ENCODE measurements at regions of chr3 and their contacts with region 1.

Region 1: DNA sequence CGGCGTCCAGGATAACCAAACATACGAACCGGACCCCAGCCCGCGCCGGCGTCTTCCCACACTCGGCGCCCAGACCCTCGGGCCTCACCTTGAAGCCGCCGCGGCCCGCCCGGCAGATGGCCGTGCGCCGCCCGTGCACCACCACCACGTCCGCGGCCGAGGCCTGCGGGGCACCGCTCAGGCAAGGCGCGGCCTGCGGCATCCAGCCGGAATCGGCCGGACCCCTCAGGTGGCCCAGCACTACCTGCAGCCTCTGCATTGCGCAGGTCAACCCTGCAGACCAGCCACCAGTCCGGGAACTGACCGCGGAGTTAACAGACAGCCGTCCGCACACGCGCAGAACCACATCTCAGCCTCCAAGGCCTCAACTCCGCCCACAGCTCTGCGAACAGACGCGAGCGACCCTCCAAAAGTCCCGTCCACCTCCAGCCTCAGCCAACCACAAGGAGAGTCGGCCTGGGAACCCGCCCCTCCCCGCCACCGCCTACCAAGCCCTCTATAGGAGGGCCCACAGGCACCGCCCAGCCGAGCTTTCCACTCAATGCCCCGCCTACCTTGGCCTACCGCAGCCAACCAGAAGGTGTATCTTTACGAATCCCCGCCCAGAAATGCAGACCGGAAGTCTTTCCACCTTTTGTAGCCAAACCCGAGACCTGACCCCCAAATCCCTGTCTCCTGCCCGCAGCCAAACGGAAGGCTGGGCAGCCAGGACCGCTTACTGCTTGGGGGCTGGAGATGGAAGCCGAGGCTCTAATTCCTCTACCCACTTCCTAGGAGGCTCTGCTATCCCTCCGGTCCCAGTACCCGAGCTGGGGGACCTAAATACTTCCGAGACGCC is at the start of gene ACAA1:
- DNase-seq: peak; percentile 100
- H3K4me3 ChIP-seq: peak within 1 kb of the TSS; percentile 94 to 98 (median 94)
- H3K27ac ChIP-seq: peak within 1 kb of the TSS; percentile 92 to 97 (median 94)
- H3K4me1 ChIP-seq: peaks cover 29 to 62% (median 46%) of the 10 kb centered on the region in 4 donors
- H3K27me3 ChIP-seq: no peaks in the 10 kb centered on the region
- CTCF ChIP-seq: no peak
- EP300 ChIP-seq: no peak
- POLR2A ChIP-seq: peak; percentile 79
- total RNA-seq, gene ACAA1: 31.3 to 49.4 (median 39.1) TPM

Region 2: DNA sequence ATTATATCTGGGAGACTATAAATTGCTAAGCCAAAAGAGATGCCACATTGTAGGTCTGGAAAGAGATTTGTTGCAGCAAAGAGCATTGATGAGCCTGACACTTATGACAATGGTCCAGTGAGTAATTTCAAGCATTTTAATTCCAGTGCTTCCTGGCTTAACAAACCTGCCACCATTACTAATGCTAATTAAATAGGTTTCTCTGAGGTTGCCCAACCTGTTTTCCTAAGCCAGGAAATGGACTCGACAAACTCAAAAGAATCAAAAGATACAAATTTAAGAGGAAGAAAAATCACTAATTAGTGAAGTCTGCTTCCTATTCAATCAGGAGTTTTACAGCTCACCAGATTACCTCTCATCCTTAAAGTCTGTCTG is 312.1 kb before region 1 on chr3:
- intact Hi-C with region 1: no loop called
- DNase-seq: no peak
- H3K4me3 ChIP-seq: no peak overlapping the region
- H3K27ac ChIP-seq: no peak overlapping the region
- H3K4me1 ChIP-seq: peaks cover 8 to 30% (median 18%) of the 10 kb centered on the region in 4 donors
- H3K27me3 ChIP-seq: no peaks in the 10 kb centered on the region
- CTCF ChIP-seq: no peak
- EP300 ChIP-seq: no peak
- POLR2A ChIP-seq: no peak

Region 3: DNA sequence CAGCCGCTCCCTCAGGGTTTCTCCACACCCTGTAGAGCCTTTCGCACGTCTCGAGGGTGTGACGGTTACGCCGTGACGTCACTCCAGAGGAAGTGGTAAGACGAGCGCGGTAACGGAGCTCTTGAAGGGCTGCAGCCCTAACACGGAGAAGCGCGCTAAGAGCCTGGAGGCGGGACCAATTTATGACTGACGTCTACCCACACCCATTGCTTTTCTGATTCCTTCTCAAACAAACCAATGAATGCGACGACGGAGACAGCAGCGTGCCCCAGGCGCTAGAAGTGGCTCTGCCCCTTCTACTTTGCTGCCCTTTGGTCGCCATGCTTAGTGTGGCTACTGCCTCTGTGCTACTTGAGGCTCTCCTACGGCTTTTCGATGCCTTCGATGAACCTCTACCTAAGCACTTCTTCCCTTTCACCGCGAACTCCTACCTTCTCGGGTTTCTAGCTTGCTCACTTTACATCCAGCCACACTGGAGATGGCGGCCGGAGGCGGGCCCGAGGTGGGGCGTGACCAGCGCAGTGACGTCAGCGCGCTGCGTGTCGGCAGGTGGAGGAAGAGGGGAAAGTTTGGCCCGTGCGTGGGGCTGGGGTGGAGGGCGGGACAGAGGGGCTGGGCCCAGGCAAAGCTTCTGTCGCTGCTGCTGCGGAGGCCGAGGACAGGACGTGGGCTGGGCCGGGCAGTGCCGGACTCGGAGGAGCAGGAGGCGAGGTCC is 28.1 kb after region 1 on chr3 and contains the start of gene OXSR1:
- intact Hi-C with region 1: loop called (anchors 2 kb)
- DNase-seq: peak; percentile 100
- H3K4me3 ChIP-seq: peak within 1 kb of the TSS; percentile 86 to 99 (median 92)
- H3K27ac ChIP-seq: peak within 1 kb of the TSS; percentile 97 to 98 (median 97)
- H3K4me1 ChIP-seq: peaks cover 14 to 45% (median 43%) of the 10 kb centered on the region in 4 donors
- H3K27me3 ChIP-seq: no peaks in the 10 kb centered on the region
- CTCF ChIP-seq: no peak
- EP300 ChIP-seq: peak; percentile 15
- POLR2A ChIP-seq: peak; percentile 85
- total RNA-seq, gene OXSR1: 27.0 to 46.7 (median 32.9) TPM

Region 4: GRCh38 chr3:38190481-38190881 is 53.5 kb after region 1 on chr3:
- intact Hi-C with region 1: no loop called
- DNase-seq: no peak
- H3K4me3 ChIP-seq: no peak overlapping the region
- H3K27ac ChIP-seq: no peak overlapping the region
- H3K4me1 ChIP-seq: peaks cover 0 to 11% (median 0%) of the 10 kb centered on the region in 4 donors
- H3K27me3 ChIP-seq: no peaks in the 10 kb centered on the region
- CTCF ChIP-seq: no peak
- EP300 ChIP-seq: no peak
- POLR2A ChIP-seq: no peak

Region 5: DNA sequence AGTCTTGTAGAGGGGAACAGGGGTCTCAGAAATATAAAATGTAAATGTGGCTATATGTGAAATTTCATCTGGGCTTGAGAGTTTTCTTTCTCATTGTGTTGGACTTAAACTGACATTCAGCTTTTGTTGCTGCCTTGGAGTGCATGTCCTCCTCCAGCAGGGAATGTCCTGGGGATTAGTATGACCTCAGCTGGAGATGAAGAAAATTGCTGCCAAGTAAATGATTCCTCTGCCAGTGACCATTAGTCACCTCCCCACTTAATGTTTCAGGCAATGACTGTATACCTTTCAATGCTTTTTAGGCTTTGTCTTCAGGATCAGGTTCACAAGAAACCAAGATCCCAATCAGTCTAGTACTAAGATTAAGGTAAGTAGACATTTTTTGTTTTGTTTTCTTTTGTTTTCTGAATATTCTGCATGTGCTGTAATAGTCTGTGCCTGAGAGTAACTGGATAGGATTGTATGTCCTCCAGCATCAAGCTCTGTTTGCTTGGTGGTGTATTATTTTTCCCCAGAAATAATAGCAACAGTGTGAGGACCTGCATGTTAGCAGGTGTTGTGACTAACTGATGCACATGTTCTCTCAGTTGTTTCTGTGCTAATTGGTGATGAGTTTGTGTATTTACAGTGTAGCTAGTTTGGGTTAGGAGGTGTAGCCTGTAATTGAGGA is 110.5 kb after region 1 on chr3:
- intact Hi-C with region 1: loop called (anchors 5 kb)
- DNase-seq: no peak
- H3K4me3 ChIP-seq: no peak overlapping the region
- H3K27ac ChIP-seq: no peak overlapping the region
- H3K4me1 ChIP-seq: peaks cover 0 to 10% (median 8%) of the 10 kb centered on the region in 4 donors
- H3K27me3 ChIP-seq: no peaks in the 10 kb centered on the region
- CTCF ChIP-seq: peak in 2 of 3 experiments; percentile 25 to 36
- EP300 ChIP-seq: no peak
- POLR2A ChIP-seq: no peak

Region 6: GRCh38 chr3:38453075-38453912 is 316.3 kb after region 1 on chr3 and contains the start of gene ACVR2B:
- intact Hi-C with region 1: loop called (anchors 5 kb)
- DNase-seq: no peak
- H3K4me3 ChIP-seq: peak within 1 kb of the TSS; percentile 78 to 94 (median 90)
- H3K27ac ChIP-seq: peak within 1 kb of the TSS; percentile 84 to 92 (median 90)
- H3K4me1 ChIP-seq: peaks cover 11 to 40% (median 36%) of the 10 kb centered on the region in 4 donors
- H3K27me3 ChIP-seq: no peaks in the 10 kb centered on the region
- CTCF ChIP-seq: no peak
- EP300 ChIP-seq: no peak
- POLR2A ChIP-seq: no peak
- total RNA-seq, gene ACVR2B: 3.8 to 9.8 (median 5.9) TPM